Dorsolateral prefrontal cortex (tissue), 120 donors: ENCODE measurements at regions of chr19 and their contacts with region 1.

Region 1: DNA sequence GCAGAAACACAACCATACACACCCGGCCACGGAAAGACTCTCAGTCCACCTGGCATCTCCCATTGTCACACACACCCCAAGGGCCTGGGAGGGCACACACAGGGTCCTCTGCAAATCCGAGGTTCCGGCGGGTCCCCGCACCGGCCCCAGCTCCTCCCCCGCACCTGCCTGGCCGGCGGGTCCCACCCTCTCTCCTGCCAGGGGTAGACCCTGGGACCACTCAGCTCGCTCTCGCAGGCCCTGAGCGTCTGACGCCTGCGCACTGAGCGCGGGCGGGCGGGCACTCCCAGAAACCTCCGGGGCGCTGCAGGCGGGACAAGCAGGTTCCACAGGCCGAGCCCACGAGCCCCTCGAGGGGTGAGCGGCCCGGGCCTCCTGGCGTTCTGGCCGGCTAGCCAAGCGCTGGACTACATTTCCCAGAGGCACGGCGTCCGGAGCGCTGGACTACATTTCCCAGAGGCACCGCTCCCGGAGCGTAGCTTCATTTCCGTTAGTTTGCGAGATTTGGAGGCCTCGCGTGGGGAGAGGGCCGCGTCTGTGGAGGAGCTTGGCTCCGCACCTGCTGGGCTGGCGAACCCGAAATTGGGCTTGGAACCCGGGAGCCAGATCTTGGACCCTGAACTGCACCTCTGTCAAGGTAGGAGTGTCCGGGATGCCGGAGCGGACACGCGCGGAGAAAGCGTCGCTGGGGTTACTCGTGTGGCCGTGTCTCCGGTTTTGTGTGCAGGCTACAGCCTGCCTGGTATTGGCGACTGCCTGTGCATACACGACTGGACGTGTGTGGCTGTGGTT is at the start of gene ZNF420:
- DNase-seq: peak; percentile 87 to 96 (median 94)
- H3K4me3 ChIP-seq: peak within 1 kb of the TSS; percentile 65 to 99 (median 90)
- H3K27ac ChIP-seq: peak within 1 kb of the TSS; percentile 36 to 97 (median 88)
- H3K27me3 ChIP-seq: no peaks in the 10 kb centered on the region
- CTCF ChIP-seq: peak in 36 of 56 donors; percentile 5 to 61 (median 30)
- total RNA-seq, gene ZNF420: 12.8 to 34.4 (median 22.6) TPM

Region 2: GRCh38 chr19:36837906-36838783 is 240.0 kb before region 1 on chr19 and contains the start of gene ZNF790:
- intact Hi-C with region 1: loop called in 1 of 2 experiments (anchors 10 kb)
- DNase-seq: peak; percentile 87 to 95 (median 93)
- H3K4me3 ChIP-seq: peak within 1 kb of the TSS; percentile 65 to 99 (median 82)
- H3K27ac ChIP-seq: peak within 1 kb of the TSS; percentile 79 to 99 (median 94)
- H3K27me3 ChIP-seq: no peaks in the 10 kb centered on the region
- CTCF ChIP-seq: peak in 7 of 56 donors; percentile 13 to 28 (median 17)
- total RNA-seq, gene ZNF790: 8.6 to 21.8 (median 12.8) TPM

Region 3: DNA sequence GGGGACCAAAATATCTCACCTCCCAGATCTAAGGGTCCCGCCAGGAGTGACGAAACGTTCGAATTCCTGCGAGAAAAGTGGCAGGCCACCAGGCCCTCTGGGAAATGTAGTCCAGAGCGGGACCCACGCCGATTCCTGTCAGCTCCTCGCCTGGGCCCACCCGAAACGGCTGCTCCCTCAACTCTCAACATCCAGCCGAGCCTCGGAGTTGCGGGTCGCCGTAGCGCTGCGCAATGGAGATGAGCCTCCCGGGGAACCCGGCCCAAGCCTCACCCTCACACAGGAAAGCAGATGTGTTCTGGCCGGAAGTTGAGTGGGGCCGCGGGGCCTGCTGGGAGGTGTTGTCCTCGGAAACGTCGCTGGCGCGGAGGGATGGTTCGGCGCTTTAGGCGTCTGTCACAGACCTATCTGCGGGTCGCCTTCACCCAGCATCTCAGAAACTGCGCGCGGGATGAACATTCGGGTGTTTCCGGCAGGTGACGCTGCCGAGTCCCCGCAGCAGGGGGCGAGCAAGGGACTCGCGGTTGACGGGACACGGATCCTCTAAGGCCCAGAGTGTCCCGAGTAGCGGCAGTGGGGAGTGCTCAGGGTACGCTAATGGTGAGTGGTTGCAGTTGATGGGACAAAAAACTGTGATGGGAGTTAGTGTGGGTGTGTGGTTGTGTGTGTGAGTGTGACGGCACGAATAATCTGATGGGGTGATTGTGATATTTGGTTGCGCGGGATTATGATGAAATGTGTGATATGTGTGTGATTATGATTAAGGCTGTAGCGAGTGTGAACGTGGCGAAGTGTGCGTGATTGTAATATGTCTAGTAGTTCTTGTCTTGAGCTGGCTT is 161.9 kb before region 1 on chr19 and contains the starts of genes ZNF568 and ZNF829:
- intact Hi-C with region 1: loop called in 1 of 2 experiments (anchors 5 kb)
- DNase-seq: peak; percentile 83 to 94 (median 92)
- H3K4me3 ChIP-seq: peak within 1 kb of the TSS; percentile 59 to 98 (median 83)
- H3K27ac ChIP-seq: peak within 1 kb of the TSS; percentile 89 to 100 (median 97)
- H3K27me3 ChIP-seq: no peaks in the 10 kb centered on the region
- CTCF ChIP-seq: peak in 55 of 56 donors; percentile 23 to 77 (median 58)
- total RNA-seq, gene ZNF568: 17.6 to 31.2 (median 23.0) TPM
- total RNA-seq, gene ZNF829: 3.1 to 8.6 (median 4.9) TPM

Region 4: DNA sequence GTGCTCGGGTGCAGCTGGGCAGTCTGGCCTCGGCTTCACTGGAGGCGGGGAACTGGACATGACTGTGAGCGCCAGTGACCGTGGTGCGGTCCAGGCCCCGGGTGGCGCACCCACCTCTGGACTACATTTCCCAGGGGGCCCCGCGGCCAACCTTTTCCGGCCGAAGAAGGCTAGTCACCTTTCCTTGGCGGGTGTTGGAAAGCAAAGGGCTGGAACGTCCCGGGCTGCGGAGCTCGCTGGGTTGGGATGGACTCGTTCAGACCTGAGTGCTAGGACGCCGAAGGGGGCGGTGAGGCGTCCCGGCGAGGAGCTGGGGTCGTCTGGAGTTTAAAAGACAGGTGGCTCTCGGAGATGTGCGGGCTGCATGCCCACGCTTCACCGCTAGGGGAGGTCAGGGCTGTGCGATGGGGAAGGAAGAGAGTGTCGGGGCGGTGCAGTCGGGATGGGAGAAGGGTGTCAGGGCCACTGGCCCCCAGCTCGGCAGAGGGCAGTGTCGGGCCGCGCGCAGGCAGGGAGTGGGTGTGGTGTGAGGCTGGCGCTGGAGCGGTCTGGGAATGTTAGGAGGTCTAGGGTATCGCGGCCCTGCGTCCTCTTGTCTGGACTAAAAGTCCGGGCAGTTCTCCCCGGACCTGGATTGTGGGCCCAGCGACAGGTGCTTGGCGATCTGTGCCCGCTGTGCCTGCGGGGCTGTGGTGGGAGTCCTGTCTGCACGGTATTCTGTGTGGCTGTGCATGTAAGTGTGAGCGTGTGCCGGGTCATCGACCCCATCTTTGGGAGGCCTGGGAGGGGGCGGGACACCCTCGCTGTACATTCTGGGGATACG is 104.9 kb before region 1 on chr19:
- intact Hi-C with region 1: loop called (anchors 2 to 5 kb)
- DNase-seq: peak; percentile 77 to 93 (median 87)
- H3K4me3 ChIP-seq: peak overlapping the region; percentile 50 to 91 (median 79)
- H3K27ac ChIP-seq: peak overlapping the region in 58 of 59 donors; percentile 29 to 93 (median 83)
- H3K27me3 ChIP-seq: no peaks in the 10 kb centered on the region
- CTCF ChIP-seq: peak; percentile 52 to 100 (median 86)

Region 5: DNA sequence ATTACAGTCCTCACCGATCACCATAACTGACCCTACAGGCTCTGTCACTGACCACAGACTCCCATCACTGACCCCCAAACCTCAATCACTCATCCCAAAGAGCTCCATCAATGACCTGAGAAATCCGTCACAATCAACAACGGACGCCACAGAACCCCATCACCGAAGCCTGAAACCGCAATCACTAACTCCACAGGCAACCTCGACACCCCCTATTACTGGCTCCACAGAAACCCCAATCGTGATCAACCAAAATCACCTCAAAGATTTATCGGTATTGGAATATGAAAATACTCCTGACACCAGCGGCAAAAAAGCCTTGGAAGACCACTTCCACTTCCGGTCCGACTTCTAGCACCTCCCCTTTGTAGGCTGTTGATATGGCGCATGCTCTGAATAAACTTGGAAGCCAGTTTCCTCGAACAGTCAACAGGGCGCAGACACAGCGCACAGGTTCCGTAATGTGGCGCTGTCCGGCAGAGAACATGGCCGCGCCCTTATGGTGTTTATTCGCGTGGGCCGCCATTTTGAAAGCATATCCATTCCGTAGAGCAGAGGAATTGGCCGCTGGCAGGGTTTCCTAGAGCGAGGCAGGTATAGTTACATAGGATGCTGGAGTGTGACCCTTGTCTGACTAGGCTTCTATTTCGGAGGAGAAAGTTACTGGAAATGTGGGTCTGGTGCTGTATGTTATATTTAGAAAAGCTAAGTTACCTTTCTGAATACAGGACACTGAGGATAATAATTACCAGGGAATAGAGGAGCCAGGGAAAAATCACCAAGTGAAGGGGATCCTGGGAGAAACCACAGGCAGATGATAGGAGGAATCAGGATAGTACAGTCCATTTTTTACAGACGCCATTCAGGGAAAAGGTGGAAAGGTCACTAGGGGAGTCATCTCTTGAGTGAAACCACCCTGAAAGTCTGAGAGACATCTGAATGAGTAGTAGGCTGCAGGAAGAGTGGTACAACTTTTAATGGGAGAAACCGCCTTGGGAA is 94.5 kb after region 1 on chr19 and contains the start of gene ZNF585A:
- intact Hi-C with region 1: loop called in 1 of 2 experiments (anchors 5 kb)
- DNase-seq: peak; percentile 85 to 98 (median 94)
- H3K4me3 ChIP-seq: peak within 1 kb of the TSS; percentile 39 to 95 (median 78)
- H3K27ac ChIP-seq: peak within 1 kb of the TSS in 54 of 59 donors; percentile 19 to 85 (median 68)
- H3K27me3 ChIP-seq: no peaks in the 10 kb centered on the region
- CTCF ChIP-seq: peak in 55 of 56 donors; percentile 18 to 76 (median 56)
- total RNA-seq, gene ZNF585A: 13.4 to 28.1 (median 20.6) TPM